Sigmoid colon (tissue), 7 donors: ENCODE measurements at regions of chr3 and their contacts with region 1.

Region 1: GRCh38 chr3:42831321-42831713 is 22.1 kb downstream of the ACKR2 start:
- DNase-seq: peak; percentile 79
- H3K4me3 ChIP-seq: no peak overlapping the region
- H3K27ac ChIP-seq: no peak overlapping the region
- H3K4me1 ChIP-seq: no peaks in the 10 kb centered on the region
- H3K27me3 ChIP-seq: no peaks in the 10 kb centered on the region
- CTCF ChIP-seq: peak; percentile 19 to 69 (median 58)
- EP300 ChIP-seq: no peak
- POLR2A ChIP-seq: no peak

Region 2: DNA sequence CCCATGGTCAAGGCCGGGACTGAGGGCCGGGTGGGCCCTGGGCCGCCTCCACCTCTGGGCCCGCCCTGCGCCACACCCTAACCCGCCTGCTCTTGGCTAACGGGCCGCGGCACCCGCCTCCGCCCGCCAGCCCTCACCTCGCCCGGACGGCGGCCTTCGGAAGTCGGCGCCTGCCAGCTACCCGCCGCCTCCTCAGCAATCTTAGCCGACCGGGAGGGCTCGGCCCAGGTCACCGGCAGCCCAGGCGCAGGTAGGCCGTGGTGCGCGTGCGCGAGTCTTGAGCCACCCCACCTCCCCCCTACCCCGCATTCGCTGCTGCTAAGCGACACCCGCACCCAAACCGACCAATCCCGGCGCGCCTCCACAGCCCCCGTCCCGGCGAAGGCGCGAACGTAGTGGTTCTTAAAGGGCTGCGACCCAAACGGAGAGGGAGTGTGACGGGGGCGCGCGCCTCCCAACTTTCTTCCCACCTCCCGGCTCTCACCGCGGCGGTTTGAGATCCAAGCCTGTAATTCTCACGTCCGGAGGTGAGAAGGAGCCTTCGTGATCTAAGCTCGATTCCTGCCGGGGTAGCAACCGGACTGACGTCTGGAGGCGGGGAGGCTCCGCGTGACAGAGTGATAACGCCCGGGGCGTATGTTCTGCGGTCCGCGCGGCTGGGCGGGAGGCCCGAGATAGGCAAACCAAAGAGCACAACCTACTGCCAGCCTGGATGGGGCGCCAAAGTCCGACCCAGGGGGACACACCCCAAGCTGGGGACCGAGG is 249.4 kb before region 1 on chr3 and contains the start of gene SEC22C:
- intact Hi-C with region 1: loop called (anchors 5 kb)
- DNase-seq: peak; percentile 98
- H3K4me3 ChIP-seq: peak within 1 kb of the TSS; percentile 56 to 97 (median 86)
- H3K27ac ChIP-seq: peak within 1 kb of the TSS; percentile 87 to 93 (median 90)
- H3K4me1 ChIP-seq: peaks cover 0 to 26% (median 20%) of the 10 kb centered on the region in 4 donors
- H3K27me3 ChIP-seq: no peaks in the 10 kb centered on the region
- CTCF ChIP-seq: no peak
- EP300 ChIP-seq: no peak
- POLR2A ChIP-seq: peak; percentile 58 to 67
- total RNA-seq, gene SEC22C: 48.5 to 89.2 (median 57.2) TPM